ENCODE measurements at regions of chr2 and their contacts with region 1.

Region 1: DNA sequence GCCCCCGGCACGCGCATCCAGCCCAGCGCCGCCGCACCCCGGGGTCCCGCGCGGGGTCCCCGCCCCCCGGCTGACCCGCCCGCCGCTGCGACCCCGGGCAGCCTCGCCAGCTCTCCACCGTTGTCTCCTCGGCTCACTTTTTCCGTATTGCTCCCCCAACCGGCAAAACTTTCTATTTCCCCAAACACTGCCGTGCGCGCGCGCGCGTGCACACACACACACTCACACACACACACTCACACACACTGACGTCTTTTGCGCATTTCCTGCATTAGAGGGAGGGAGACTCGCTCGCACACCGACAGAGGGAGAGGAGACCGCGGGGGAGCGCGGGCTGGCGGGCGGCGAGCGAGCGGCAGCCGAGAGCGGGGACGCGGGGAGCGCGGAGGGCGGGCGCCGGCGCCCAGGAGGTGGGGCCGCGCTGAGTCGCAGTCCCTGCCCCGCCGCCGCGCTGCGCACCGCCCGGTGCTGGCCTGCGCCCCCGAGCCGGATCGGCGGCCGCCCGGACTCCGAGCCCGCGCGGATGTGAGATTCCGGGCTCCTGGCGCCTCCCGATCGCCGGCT is 542 bp upstream of the PRKCE start:
- DNase-seq: peak; percentile 90
- ATAC-seq: peak; percentile 89
- H3K4me3 Mint-ChIP-seq: peak overlapping the region; percentile 92
- H3K27ac Mint-ChIP-seq: peak overlapping the region; percentile 95
- H3K4me1 Mint-ChIP-seq: peaks cover 52% of the 10 kb centered on the region
- H3K27me3 Mint-ChIP-seq: peaks cover 2% of the 10 kb centered on the region
- CTCF ChIP-seq: no peak

Region 2: DNA sequence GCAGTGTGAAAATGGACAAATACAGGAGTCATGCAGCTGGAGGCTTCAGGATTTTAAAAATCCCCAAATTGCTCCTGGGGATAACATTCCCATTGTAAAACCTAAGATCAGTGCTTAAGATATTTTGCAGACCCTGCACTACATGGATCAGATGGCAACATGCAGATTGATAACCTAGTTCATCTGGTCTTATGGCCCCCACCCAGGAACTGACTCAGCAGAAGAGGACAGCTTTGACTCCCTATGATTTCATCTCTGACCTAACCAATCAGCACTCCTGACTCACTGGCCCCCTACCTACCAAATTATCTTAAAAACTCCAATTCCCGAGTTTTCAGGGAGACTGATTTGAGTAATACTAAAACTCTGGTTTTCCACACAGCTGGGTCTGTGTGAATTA is 59.9 kb before region 1 on chr2:
- CTCF ChIA-PET with region 1: no interaction called
- POLR2A ChIA-PET with region 1: no interaction called
- intact Hi-C with region 1: no loop called
- DNase-seq: no peak
- ATAC-seq: no peak
- H3K4me3 Mint-ChIP-seq: no peak overlapping the region
- H3K27ac Mint-ChIP-seq: no peak overlapping the region
- H3K4me1 Mint-ChIP-seq: peaks cover 16% of the 10 kb centered on the region
- H3K27me3 Mint-ChIP-seq: no peaks in the 10 kb centered on the region
- CTCF ChIP-seq: no peak

Region 3: GRCh38 chr2:45611020-45611737 is 39.8 kb before region 1 on chr2 and contains the start of gene SRBD1:
- CTCF ChIA-PET with region 1: no interaction called
- POLR2A ChIA-PET with region 1: interaction called, 13 read pairs
- intact Hi-C with region 1: loop called (anchors 1 kb)
- DNase-seq: peak; percentile 94
- ATAC-seq: peak; percentile 98
- H3K4me3 Mint-ChIP-seq: peak within 1 kb of the TSS; percentile 96
- H3K27ac Mint-ChIP-seq: peak within 1 kb of the TSS; percentile 95
- H3K4me1 Mint-ChIP-seq: peaks cover 29% of the 10 kb centered on the region
- H3K27me3 Mint-ChIP-seq: no peaks in the 10 kb centered on the region
- CTCF ChIP-seq: no peak
- total RNA-seq, gene SRBD1: 20.2 and 20.8 TPM in 2 replicates

Region 4: GRCh38 chr2:45691171-45691999 is 40.5 kb after region 1 on chr2:
- CTCF ChIA-PET with region 1: interaction called, 3 read pairs
- POLR2A ChIA-PET with region 1: interaction called, 20 read pairs
- intact Hi-C with region 1: loop called (anchors 1 kb)
- DNase-seq: no peak
- ATAC-seq: peak; percentile 45
- H3K4me3 Mint-ChIP-seq: peak overlapping the region; percentile 64
- H3K27ac Mint-ChIP-seq: peak overlapping the region; percentile 70
- H3K4me1 Mint-ChIP-seq: peaks cover 54% of the 10 kb centered on the region
- H3K27me3 Mint-ChIP-seq: no peaks in the 10 kb centered on the region
- CTCF ChIP-seq: no peak

Region 5: DNA sequence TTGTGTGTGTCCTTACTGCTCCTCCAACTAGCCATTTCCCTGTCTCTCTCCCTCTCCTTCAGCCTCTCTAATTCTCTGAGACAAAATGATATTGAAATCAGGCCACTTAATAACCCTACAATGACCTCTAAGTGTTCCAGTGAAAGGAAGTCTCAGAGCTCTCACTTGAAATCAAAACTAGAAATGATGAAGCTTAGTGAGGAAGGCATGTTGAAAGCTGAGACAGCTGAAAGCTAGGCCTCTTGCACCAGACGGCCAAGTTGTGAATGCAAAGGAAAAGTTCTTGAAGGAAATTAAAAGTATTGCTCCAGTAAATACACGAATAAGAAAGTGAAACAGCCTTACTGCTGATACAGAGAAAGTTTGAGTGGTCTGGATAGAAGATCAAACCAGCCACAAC is 73.4 kb after region 1 on chr2:
- CTCF ChIA-PET with region 1: interaction called, 19 read pairs
- POLR2A ChIA-PET with region 1: interaction called, 211 read pairs
- intact Hi-C with region 1: loop called (anchors 1 kb)
- DNase-seq: no peak
- ATAC-seq: no peak
- H3K4me3 Mint-ChIP-seq: peak overlapping the region; percentile 56
- H3K27ac Mint-ChIP-seq: peak overlapping the region; percentile 98
- H3K4me1 Mint-ChIP-seq: peaks cover 95% of the 10 kb centered on the region
- H3K27me3 Mint-ChIP-seq: no peaks in the 10 kb centered on the region
- CTCF ChIP-seq: no peak

Region 6: GRCh38 chr2:45765728-45766254 is 114.9 kb after region 1 on chr2:
- CTCF ChIA-PET with region 1: no interaction called
- POLR2A ChIA-PET with region 1: no interaction called
- intact Hi-C with region 1: no loop called
- DNase-seq: no peak
- ATAC-seq: no peak
- H3K4me3 Mint-ChIP-seq: no peak overlapping the region
- H3K27ac Mint-ChIP-seq: peak overlapping the region; percentile 48
- H3K4me1 Mint-ChIP-seq: peaks cover 77% of the 10 kb centered on the region
- H3K27me3 Mint-ChIP-seq: no peaks in the 10 kb centered on the region
- CTCF ChIP-seq: no peak

Region 7: GRCh38 chr2:45778720-45779171 is 127.8 kb after region 1 on chr2:
- CTCF ChIA-PET with region 1: interaction called, 86 read pairs
- POLR2A ChIA-PET with region 1: interaction called, 36 read pairs
- intact Hi-C with region 1: loop called (anchors 1 kb)
- DNase-seq: peak; percentile 35
- ATAC-seq: peak; percentile 83
- H3K4me3 Mint-ChIP-seq: peak overlapping the region; percentile 44
- H3K27ac Mint-ChIP-seq: peak overlapping the region; percentile 39
- H3K4me1 Mint-ChIP-seq: peaks cover 76% of the 10 kb centered on the region
- H3K27me3 Mint-ChIP-seq: no peaks in the 10 kb centered on the region
- CTCF ChIP-seq: no peak

Region 8: DNA sequence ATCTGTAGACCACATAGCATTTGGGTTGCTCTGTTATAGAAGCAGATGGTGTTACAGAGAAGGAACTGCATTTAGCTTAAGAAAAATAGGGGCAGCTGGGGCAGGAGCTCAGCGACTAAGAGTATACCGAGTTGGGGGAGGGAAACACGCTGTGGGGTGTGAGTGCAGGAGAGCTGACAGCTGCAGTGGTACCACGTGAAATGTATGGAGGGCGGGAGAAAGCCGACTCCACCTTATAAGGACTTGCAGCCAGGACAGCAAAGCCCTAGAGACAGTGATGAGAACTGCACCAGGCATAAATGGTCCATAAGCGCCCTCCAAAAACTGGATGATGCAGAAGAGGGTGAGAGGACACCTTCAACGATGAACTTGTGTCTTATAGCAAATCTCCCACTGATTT is 238.1 kb after region 1 on chr2:
- CTCF ChIA-PET with region 1: no interaction called
- POLR2A ChIA-PET with region 1: interaction called, 20 read pairs
- intact Hi-C with region 1: loop called (anchors 1 kb)
- DNase-seq: no peak
- ATAC-seq: peak; percentile 79
- H3K4me3 Mint-ChIP-seq: peak overlapping the region; percentile 36
- H3K27ac Mint-ChIP-seq: peak overlapping the region; percentile 51
- H3K4me1 Mint-ChIP-seq: peaks cover 90% of the 10 kb centered on the region
- H3K27me3 Mint-ChIP-seq: no peaks in the 10 kb centered on the region
- CTCF ChIP-seq: no peak

Region 9: GRCh38 chr2:45935791-45936622 is 285.1 kb after region 1 on chr2:
- CTCF ChIA-PET with region 1: interaction called, 18 read pairs
- POLR2A ChIA-PET with region 1: interaction called, 10 read pairs
- intact Hi-C with region 1: no loop called
- DNase-seq: peak; percentile 41
- ATAC-seq: peak; percentile 85
- H3K4me3 Mint-ChIP-seq: no peak overlapping the region
- H3K27ac Mint-ChIP-seq: no peak overlapping the region
- H3K4me1 Mint-ChIP-seq: peaks cover 6% of the 10 kb centered on the region
- H3K27me3 Mint-ChIP-seq: no peaks in the 10 kb centered on the region
- CTCF ChIP-seq: no peak